Mammary epithelial cell (primary cell): ENCODE measurements at regions of chr3 and their contacts with region 1.

Region 1: GRCh38 chr3:18237251-18238005 is 187.7 kb downstream of the SATB1 start:
- DNase-seq: peak; percentile 91
- H3K4me3 ChIP-seq: peak overlapping the region in 2 of 3 experiments; percentile 2 to 20
- H3K27ac ChIP-seq: peak overlapping the region; percentile 65
- H3K4me1 ChIP-seq: peaks cover 55% of the 10 kb centered on the region
- H3K27me3 ChIP-seq: no peaks in the 10 kb centered on the region
- CTCF ChIP-seq: no peak

Region 2: GRCh38 chr3:18185624-18186023 is 51.8 kb before region 1 on chr3:
- CTCF ChIA-PET with region 1: interaction called, 22 read pairs
- dilution Hi-C with region 1: no loop called
- in situ Hi-C with region 1: no loop called
- intact Hi-C with region 1: no loop called
- DNase-seq: peak; percentile 26
- H3K4me3 ChIP-seq: no peak overlapping the region
- H3K27ac ChIP-seq: no peak overlapping the region
- H3K4me1 ChIP-seq: peaks cover 6% of the 10 kb centered on the region
- H3K27me3 ChIP-seq: no peaks in the 10 kb centered on the region
- CTCF ChIP-seq: no peak

Region 3: GRCh38 chr3:18223573-18223972 is 13.9 kb before region 1 on chr3:
- CTCF ChIA-PET with region 1: no interaction called
- dilution Hi-C with region 1: no loop called
- in situ Hi-C with region 1: no loop called
- intact Hi-C with region 1: no loop called
- DNase-seq: no peak
- H3K4me3 ChIP-seq: no peak overlapping the region
- H3K27ac ChIP-seq: no peak overlapping the region
- H3K4me1 ChIP-seq: no peaks in the 10 kb centered on the region
- H3K27me3 ChIP-seq: no peaks in the 10 kb centered on the region
- CTCF ChIP-seq: no peak